Dendritic cell treated with granulocyte-macrophage colony-stimulating factor and Interleukin-4, amounts not matched to agents 40 ng/mL and 50 ng/mL, for 4 days (primary cell): ENCODE measurements at regions of chr17 and their contacts with region 1.

Region 1: DNA sequence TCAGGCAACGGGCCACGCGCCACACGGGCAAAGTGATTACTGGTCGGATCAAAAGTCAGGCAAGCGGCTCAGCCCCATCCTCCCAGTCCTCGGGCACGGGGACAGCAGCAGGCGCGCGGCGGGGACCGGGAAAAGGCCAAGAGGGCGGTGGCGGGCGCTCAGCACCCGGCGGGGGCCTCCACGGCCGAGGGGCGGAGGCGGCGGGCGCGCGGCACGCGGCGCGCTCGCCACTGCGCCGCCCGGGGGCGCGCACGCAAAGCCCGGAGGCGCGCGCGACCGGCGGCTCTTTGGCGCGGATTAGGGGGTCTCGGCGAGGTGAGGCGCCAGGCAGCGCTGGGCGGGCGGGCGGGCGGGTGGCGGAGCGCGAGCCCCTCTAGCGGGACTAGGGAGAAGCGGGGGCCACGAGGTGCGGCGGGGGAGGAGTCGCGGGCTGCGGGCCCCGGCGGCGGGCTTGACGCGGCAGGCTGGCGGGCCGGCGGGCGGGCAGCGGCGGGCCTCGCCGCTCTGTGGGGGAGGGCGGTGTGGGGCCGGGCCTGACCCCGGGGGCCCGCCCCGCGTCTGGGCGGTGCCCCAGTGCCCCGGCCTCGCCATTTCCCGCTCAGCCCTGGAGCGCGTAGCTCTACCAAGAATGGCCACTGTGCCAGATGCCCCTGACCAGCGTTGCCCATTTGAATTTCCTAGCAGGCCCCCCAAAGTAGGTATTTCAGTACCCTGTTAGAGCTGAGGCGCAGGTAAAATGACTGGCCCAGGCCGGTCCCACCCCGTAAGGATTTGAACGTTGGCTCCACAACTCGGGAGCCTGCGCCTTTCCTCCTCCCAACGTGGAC is at the starts of genes ACACA and TADA2A:
- H3K4me3 Mint-ChIP-seq: peak within 1 kb of the TSS; percentile 95
- H3K27ac Mint-ChIP-seq: peak within 1 kb of the TSS; percentile 93
- H3K4me1 Mint-ChIP-seq: peaks cover 38% of the 10 kb centered on the region
- H3K27me3 Mint-ChIP-seq: no peaks in the 10 kb centered on the region

Region 2: GRCh38 chr17:37190493-37190892 is 216.4 kb before region 1 on chr17:
- intact Hi-C with region 1: no loop called
- H3K4me3 Mint-ChIP-seq: no peak overlapping the region
- H3K27ac Mint-ChIP-seq: no peak overlapping the region
- H3K4me1 Mint-ChIP-seq: no peaks in the 10 kb centered on the region
- H3K27me3 Mint-ChIP-seq: no peaks in the 10 kb centered on the region

Region 3: DNA sequence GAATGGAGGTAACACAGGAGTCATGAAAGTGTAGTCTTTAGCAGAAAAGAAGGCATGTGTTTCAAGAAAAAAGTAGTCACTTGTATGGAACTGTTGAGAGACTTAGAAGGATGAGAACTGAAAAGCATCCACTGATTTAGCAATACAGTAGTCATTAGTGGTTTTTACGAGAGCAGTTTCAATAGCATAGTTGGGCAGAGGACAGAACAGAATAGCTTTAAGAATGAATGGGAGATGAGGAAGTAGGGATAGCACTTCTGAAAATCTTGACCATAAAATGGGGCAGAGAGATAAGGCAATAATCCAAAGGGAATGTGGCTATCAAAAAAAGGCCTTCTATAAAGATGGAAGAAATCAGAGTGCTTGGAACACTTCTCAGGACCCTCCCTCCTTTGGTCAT is 95.9 kb before region 1 on chr17:
- intact Hi-C with region 1: no loop called
- H3K4me3 Mint-ChIP-seq: no peak overlapping the region
- H3K27ac Mint-ChIP-seq: no peak overlapping the region
- H3K4me1 Mint-ChIP-seq: peaks cover 17% of the 10 kb centered on the region
- H3K27me3 Mint-ChIP-seq: no peaks in the 10 kb centered on the region

Region 4: GRCh38 chr17:37358830-37359681 is 47.8 kb before region 1 on chr17:
- intact Hi-C with region 1: loop called (anchors 10 kb)
- H3K4me3 Mint-ChIP-seq: peak overlapping the region; percentile 82
- H3K27ac Mint-ChIP-seq: peak overlapping the region; percentile 90
- H3K4me1 Mint-ChIP-seq: peaks cover 32% of the 10 kb centered on the region
- H3K27me3 Mint-ChIP-seq: no peaks in the 10 kb centered on the region

Region 5: DNA sequence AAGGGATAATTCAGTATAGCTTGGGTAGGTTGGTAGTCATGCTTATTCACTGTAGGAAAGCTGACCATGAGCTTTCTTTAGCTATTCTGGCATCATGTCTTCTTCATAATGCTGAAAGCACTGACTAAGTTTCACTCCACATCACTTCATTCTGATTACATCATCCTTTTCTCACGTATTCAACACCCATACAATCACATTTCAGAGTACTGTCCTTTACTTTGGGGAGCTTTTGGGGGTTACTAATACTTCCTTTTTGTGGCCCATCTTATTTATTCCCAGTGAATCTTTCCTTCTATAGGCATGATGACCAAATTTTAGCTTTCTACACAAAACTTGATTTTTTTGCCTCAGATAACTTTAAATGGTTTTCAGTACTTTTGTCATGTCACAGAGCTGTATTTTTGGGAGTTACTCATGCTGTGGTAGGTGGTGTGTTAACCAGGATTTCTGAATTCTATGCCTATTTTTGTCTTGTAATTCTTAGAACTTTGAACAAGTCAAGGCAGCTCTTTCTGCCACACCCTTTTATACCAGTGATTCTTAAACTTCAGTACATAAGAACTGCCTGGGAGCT is 23.3 kb after region 1 on chr17:
- intact Hi-C with region 1: no loop called
- H3K4me3 Mint-ChIP-seq: no peak overlapping the region
- H3K27ac Mint-ChIP-seq: no peak overlapping the region
- H3K4me1 Mint-ChIP-seq: peaks cover 6% of the 10 kb centered on the region
- H3K27me3 Mint-ChIP-seq: no peaks in the 10 kb centered on the region

Region 6: GRCh38 chr17:37516127-37516571 is 109.3 kb after region 1 on chr17:
- intact Hi-C with region 1: no loop called
- H3K4me3 Mint-ChIP-seq: no peak overlapping the region
- H3K27ac Mint-ChIP-seq: no peak overlapping the region
- H3K4me1 Mint-ChIP-seq: no peaks in the 10 kb centered on the region
- H3K27me3 Mint-ChIP-seq: no peaks in the 10 kb centered on the region